ENCODE measurements at regions of chr4 and their contacts with region 1.

Region 1: DNA sequence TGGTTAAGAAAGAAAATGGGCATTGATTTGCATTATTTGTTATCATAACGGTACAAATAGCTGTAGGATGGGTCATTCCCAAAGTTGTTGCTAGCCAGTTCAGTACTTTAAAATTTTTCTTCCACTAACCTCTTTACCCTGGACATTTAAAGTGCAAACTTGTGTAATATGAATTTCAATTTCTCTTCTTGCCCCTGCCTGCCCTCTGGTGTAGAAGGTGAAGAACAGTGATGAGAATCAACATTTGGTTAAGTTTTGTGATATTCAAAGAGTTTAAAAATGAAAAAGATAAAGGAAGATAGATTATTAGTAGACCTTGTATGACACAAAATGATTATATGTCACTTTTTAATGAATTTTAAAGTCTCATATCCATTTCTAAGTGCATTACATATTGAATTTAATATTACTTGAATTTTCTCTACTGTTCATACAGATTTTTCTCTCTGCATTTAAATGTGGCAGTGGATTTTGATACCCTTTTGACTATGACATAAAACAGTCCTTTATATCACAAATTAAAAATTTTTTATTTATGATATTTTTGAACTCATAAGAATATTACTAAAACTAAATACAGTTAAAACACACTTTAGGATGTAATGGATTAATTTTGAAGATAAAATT is 337.7 kb downstream of the BMPR1B start:
- DNase-seq: peak; percentile 37
- H3K4me3 ChIP-seq: no peak overlapping the region
- H3K27ac ChIP-seq: no peak overlapping the region
- H3K4me1 ChIP-seq: no peaks in the 10 kb centered on the region
- H3K27me3 ChIP-seq: no peaks in the 10 kb centered on the region
- CTCF ChIP-seq: peak; percentile 65 to 82

Region 2: DNA sequence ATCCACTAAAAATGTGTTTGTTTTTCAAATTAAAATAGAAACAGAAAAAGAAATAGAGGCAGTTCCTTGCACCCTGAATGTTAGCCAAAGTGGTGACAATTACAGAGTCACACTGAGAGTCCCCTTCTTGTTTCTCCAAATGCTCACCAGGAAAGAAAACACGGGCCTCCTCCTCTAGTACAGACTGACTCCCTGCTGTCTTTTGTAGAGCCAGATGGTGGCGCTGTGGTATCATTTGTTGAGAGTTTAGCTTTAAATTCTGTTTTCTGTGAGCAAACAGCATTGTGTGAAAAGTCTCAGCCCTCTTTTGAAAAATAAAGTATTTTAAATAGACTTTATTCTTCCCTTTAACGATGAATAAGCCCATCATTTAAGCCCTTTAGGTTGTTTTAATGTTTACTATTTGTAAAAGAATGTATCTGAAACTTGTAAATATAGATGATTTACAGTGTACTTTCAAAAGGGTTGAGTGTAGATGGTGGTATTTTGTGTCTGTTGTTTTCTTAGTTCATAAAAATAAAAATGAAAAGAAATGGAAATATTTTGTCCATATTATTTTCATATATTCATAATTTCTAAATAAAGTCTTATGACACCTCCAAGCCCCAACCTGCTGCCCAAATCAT is 1303.8 kb before region 1 on chr4:
- CTCF ChIA-PET with region 1: no interaction called
- dilution Hi-C with region 1: no loop called
- in situ Hi-C with region 1: no loop called
- intact Hi-C with region 1: loop called (anchors 10 kb)
- DNase-seq: peak; percentile 26
- H3K4me3 ChIP-seq: no peak overlapping the region
- H3K27ac ChIP-seq: no peak overlapping the region
- H3K4me1 ChIP-seq: no peaks in the 10 kb centered on the region
- H3K27me3 ChIP-seq: no peaks in the 10 kb centered on the region
- CTCF ChIP-seq: peak; percentile 89 to 90

Region 3: GRCh38 chr4:94621491-94622080 is 473.9 kb before region 1 on chr4:
- CTCF ChIA-PET with region 1: interaction called, 5 read pairs
- dilution Hi-C with region 1: no loop called
- in situ Hi-C with region 1: loop called in 1 of 2 experiments (anchors 25 kb)
- intact Hi-C with region 1: loop called (anchors 1 kb)
- DNase-seq: peak; percentile 9
- H3K4me3 ChIP-seq: no peak overlapping the region
- H3K27ac ChIP-seq: no peak overlapping the region
- H3K4me1 ChIP-seq: no peaks in the 10 kb centered on the region
- H3K27me3 ChIP-seq: no peaks in the 10 kb centered on the region
- CTCF ChIP-seq: peak; percentile 62 to 74

Region 4: GRCh38 chr4:94746750-94747149 is 348.7 kb before region 1 on chr4:
- CTCF ChIA-PET with region 1: no interaction called
- dilution Hi-C with region 1: no loop called
- in situ Hi-C with region 1: loop called in 1 of 2 experiments (anchors 10 kb)
- intact Hi-C with region 1: loop called (anchors 1 kb)
- DNase-seq: no peak
- H3K4me3 ChIP-seq: no peak overlapping the region
- H3K27ac ChIP-seq: no peak overlapping the region
- H3K4me1 ChIP-seq: no peaks in the 10 kb centered on the region
- H3K27me3 ChIP-seq: peaks cover 1% of the 10 kb centered on the region
- CTCF ChIP-seq: peak; percentile 26 to 55

Region 5: GRCh38 chr4:94757192-94758139 is 338.0 kb before region 1 on chr4 and contains the start of gene BMPR1B:
- CTCF ChIA-PET with region 1: no interaction called
- dilution Hi-C with region 1: no loop called
- in situ Hi-C with region 1: no loop called
- intact Hi-C with region 1: loop called (anchors 1 kb)
- DNase-seq: peak; percentile 65
- H3K4me3 ChIP-seq: peak within 1 kb of the TSS; percentile 68 to 80 (median 70)
- H3K27ac ChIP-seq: peak within 1 kb of the TSS; percentile 7
- H3K4me1 ChIP-seq: no peaks in the 10 kb centered on the region
- H3K27me3 ChIP-seq: peaks cover 1% of the 10 kb centered on the region
- CTCF ChIP-seq: peak in 1 of 2 donors; percentile 45
- total RNA-seq, gene BMPR1B: 1.7 to 11.3 TPM

Region 6: DNA sequence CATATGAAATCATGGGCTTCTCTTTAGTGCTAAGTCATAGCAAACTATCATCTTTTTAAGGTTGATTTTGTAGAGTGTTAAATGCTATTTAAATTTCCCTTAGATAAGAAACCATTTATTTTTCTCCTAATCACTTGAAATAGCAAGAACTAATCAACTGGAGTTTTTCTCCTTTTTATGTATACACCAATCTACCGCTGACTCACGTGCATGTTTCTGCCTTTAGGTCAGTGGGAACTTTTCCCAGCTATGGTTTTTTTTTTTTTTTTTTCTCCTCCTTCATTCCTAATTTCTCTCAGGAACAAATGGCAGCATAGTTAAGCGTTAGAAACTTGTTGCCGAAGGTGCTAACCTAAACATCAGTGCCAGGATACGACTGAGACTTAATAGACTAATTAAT is 161.3 kb before region 1 on chr4:
- CTCF ChIA-PET with region 1: no interaction called
- dilution Hi-C with region 1: no loop called
- in situ Hi-C with region 1: loop called in 1 of 2 experiments (anchors 25 kb)
- intact Hi-C with region 1: no loop called
- DNase-seq: peak; percentile 23
- H3K4me3 ChIP-seq: no peak overlapping the region
- H3K27ac ChIP-seq: peak overlapping the region; percentile 34
- H3K4me1 ChIP-seq: peaks cover 17% of the 10 kb centered on the region
- H3K27me3 ChIP-seq: no peaks in the 10 kb centered on the region
- CTCF ChIP-seq: no peak